Aorta (tissue), 5 donors: ENCODE measurements at regions of chr16 and their contacts with region 1.

Region 1: DNA sequence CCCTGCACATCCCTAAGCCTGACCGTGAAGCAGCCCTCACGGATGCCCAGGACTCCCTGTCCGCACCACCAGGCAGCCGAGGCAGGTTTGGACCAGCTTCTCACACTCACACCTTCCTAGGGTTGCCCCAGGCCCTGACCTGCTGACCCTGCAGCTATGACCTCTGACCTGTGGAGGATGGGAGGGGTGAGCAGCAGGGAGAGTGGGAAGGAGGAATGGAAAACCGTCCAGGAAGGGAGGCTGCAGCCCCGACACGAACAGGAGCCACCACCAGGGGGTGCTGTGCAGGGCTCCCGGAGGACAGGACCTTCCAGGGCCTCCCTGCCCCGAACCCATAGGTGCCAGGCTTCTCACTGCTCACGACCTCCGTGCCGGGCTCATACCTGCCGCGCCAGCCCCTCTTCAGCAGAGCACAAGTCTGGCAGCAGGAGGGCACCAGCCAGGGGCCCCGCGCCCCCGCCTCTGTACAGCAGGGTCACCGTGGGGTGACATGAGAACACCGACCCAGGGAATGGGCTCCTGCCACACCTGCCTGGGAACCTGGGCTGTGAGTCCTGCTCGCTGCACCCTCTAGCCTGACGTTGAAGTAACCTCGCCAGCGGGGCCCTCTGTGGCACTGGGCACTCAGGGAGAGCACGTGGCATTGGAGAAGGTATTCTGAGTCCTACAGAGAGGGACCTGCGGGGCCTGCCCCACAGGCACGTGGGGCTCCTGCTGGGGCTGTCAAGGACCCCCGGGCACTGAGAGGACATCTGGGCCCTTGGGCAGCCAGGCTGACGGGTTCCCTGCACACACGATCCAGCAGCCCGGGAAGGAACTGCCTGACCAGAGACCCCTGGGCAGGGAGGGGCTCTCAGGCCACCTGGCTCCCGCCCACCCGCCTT is 37.6 kb downstream of the CTU2 start:
- DNase-seq: peak; percentile 86 to 95
- ATAC-seq: peak; percentile 66
- H3K4me3 ChIP-seq: no peak overlapping the region
- H3K27ac ChIP-seq: no peak overlapping the region
- H3K4me1 ChIP-seq: no peaks in the 10 kb centered on the region
- H3K27me3 ChIP-seq: no peaks in the 10 kb centered on the region

Region 2: GRCh38 chr16:88468275-88469141 is 275.4 kb before region 1 on chr16:
- intact Hi-C with region 1: no loop called
- DNase-seq: no peak
- ATAC-seq: no peak
- H3K4me3 ChIP-seq: no peak overlapping the region
- H3K27ac ChIP-seq: no peak overlapping the region
- H3K4me1 ChIP-seq: no peaks in the 10 kb centered on the region
- H3K27me3 ChIP-seq: no peaks in the 10 kb centered on the region

Region 3: GRCh38 chr16:88785106-88785924 is 41.4 kb after region 1 on chr16 and contains the start of gene PIEZO1:
- intact Hi-C with region 1: loop called (anchors 2 kb)
- DNase-seq: peak; percentile 81 to 93
- ATAC-seq: peak; percentile 77
- H3K4me3 ChIP-seq: peak within 1 kb of the TSS; percentile 79 to 92
- H3K27ac ChIP-seq: peak within 1 kb of the TSS in 1 of 2 donors; percentile 80
- H3K4me1 ChIP-seq: no peaks in the 10 kb centered on the region
- H3K27me3 ChIP-seq: no peaks in the 10 kb centered on the region
- total RNA-seq, gene PIEZO1: 101 to 120 TPM